ENCODE measurements at regions of chr16 and their contacts with region 1.

Region 1: GRCh38 chr16:70345840-70346239 is 863 bp upstream of the DDX19A start:
- DNase-seq: no peak
- ATAC-seq: no peak
- H3K4me3 Mint-ChIP-seq: peak overlapping the region; percentile 97
- H3K27ac Mint-ChIP-seq: peak overlapping the region; percentile 98
- H3K4me1 Mint-ChIP-seq: peaks cover 30% of the 10 kb centered on the region
- H3K27me3 Mint-ChIP-seq: no peaks in the 10 kb centered on the region

Region 2: GRCh38 chr16:70251629-70252354 is 94.0 kb before region 1 on chr16 and contains the start of gene EXOSC6:
- POLR2A ChIA-PET with region 1: interaction called, 11 read pairs
- DNase-seq: peak; percentile 93
- ATAC-seq: peak; percentile 86
- H3K4me3 Mint-ChIP-seq: peak within 1 kb of the TSS; percentile 88
- H3K27ac Mint-ChIP-seq: peak within 1 kb of the TSS; percentile 92
- H3K4me1 Mint-ChIP-seq: peaks cover 14% of the 10 kb centered on the region
- H3K27me3 Mint-ChIP-seq: no peaks in the 10 kb centered on the region
- total RNA-seq, gene EXOSC6: 28.8 to 29.4 TPM

Region 3: DNA sequence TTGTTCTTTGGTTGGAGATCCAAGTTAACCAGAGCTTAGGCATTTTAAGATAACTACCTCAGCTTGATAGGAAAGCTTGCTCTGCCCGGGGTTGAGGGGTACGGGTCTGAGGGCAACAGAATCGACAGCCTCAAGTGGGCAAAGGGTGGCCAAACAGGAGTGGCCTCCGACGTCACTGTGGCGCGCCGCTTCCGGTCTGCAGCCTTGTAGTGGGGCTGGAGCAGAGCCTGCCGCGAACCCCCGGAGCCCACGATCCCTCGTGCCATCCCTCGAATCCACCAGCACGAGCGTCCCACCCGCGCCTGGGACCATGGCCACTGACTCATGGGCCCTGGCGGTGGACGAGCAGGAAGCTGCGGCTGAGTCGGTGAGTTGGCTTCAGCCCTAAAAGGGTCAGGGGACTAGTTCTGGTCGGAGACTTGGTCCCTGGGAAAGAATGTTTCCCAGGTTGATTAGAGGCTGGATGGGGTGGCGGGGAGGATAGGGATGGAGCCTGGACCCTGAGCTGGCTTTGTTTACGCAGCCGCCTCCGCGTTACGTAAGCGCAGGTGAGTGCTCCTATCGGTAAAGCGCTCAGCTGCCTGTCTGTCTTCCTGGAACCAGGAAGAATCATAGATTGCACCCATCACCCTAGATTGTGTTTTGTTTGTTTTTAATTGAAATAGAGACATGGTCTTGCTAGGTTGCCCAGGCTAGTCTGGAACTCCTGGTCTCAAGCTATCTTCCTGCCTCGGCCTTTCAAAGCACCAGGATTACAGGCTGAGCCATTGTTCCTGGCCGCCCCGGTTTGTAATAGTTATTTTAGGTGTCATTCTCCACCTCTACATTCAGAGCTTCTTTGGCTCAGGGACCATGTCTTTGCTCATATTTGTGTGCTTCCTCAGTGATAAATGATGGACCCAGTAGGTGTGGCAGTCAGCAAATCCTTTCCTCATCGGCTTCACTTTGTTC is 46.6 kb before region 1 on chr16 and contains the start of gene DDX19B:
- POLR2A ChIA-PET with region 1: interaction called, 28 read pairs
- DNase-seq: peak; percentile 77
- ATAC-seq: peak; percentile 86
- H3K4me3 Mint-ChIP-seq: peak within 1 kb of the TSS; percentile 95
- H3K27ac Mint-ChIP-seq: peak within 1 kb of the TSS; percentile 84
- H3K4me1 Mint-ChIP-seq: peaks cover 23% of the 10 kb centered on the region
- H3K27me3 Mint-ChIP-seq: no peaks in the 10 kb centered on the region
- total RNA-seq, gene DDX19B: 29.8 to 32.3 TPM

Region 4: DNA sequence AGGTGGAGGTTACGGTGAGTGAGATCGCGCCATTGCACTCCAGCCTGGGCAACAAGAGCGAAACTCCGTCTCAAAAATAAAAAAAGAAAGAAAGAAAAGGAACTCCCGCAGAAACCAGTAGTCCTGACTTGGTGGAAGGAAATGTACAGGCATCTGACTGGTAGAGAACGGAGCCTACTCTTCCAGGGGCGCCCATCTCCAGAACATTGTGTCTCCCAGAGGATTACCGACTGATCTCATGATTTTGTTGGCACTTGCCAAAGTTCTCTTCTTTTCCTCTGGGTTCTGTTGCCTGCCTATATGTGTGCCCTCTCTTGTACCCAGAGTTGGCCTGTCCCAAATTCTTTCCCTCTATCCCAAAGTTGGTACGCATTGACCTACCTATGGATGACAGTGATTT is 25.1 kb after region 1 on chr16:
- POLR2A ChIA-PET with region 1: no interaction called
- DNase-seq: no peak
- ATAC-seq: no peak
- H3K4me3 Mint-ChIP-seq: no peak overlapping the region
- H3K27ac Mint-ChIP-seq: no peak overlapping the region
- H3K4me1 Mint-ChIP-seq: peaks cover 5% of the 10 kb centered on the region
- H3K27me3 Mint-ChIP-seq: no peaks in the 10 kb centered on the region

Region 5: GRCh38 chr16:70416748-70417616 is 71.1 kb after region 1 on chr16:
- POLR2A ChIA-PET with region 1: no interaction called
- DNase-seq: no peak
- ATAC-seq: no peak
- H3K4me3 Mint-ChIP-seq: peak overlapping the region; percentile 53
- H3K27ac Mint-ChIP-seq: peak overlapping the region; percentile 92
- H3K4me1 Mint-ChIP-seq: peaks cover 39% of the 10 kb centered on the region
- H3K27me3 Mint-ChIP-seq: no peaks in the 10 kb centered on the region

Region 6: DNA sequence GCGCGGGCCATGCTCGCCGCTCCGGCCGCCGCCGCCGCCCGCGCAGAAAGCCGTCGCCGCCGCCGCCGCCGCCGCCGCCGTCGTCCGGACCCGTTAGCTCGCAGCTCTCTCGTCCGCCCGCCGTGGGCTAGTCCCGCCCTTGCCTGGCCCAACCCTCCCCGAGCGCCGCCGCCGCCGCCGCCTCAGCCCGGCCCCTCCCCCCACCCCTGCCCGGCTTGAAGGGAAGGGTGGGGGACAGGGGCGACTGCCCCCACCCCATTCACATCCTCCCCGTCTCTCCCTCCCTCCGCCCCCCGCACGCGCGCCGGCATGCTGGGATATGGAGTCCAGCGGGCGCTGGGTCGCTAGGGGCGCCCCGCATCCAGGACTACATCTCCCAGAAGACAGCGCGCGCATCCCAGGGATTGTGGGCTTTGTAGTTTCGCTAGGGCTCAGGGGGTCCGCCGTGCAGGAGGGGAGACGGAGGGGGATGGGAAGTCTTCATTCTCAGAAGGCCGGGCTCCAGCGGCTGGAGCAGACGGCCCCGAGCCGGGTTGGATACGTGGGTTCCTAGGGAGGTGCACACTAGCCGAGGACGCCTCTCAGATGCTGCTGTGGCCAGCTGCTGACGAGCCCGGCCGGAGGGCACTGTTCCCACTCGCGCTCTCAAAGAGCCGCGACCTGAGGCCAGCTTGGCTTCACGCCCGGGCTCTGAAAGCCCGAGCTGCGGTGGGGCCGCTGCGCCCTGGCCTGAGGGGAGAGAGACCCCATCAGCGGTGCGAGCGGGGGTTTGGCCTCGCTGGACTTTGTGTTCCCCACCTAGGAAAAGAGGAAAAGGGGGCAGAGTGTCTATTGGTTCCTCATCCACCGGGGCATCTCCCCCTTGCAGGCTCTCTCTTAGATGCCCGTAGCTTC is 93.4 kb after region 1 on chr16 and contains the start of gene ST3GAL2:
- POLR2A ChIA-PET with region 1: interaction called, 12 read pairs
- DNase-seq: peak; percentile 93
- ATAC-seq: peak; percentile 94
- H3K4me3 Mint-ChIP-seq: peak within 1 kb of the TSS; percentile 95
- H3K27ac Mint-ChIP-seq: peak within 1 kb of the TSS; percentile 93
- H3K4me1 Mint-ChIP-seq: peaks cover 28% of the 10 kb centered on the region
- H3K27me3 Mint-ChIP-seq: no peaks in the 10 kb centered on the region
- total RNA-seq, gene ST3GAL2: 31.9 to 38.6 TPM

Measured in activated naive CD8-positive, alpha-beta T cell treated with anti-CD3 and anti-CD28 coated beads, Interleukin-2, amount 10 ng/mL, durations not matched to agents 7 days and 5 days (primary cell).